Heart right ventricle (tissue), 16 donors: ENCODE measurements at regions of chr6 and their contacts with region 1.

Region 1: GRCh38 chr6:36985808-36986703 is at the start of gene MTCH1:
- DNase-seq: peak; percentile 91 to 92
- ATAC-seq: peak; percentile 93 to 97 (median 96)
- H3K4me3 ChIP-seq: peak within 1 kb of the TSS; percentile 84 to 100 (median 99)
- H3K27ac ChIP-seq: peak within 1 kb of the TSS; percentile 95 to 100 (median 98)
- H3K4me1 ChIP-seq: peaks cover 16 to 50% (median 45%) of the 10 kb centered on the region in 9 donors
- H3K27me3 ChIP-seq: no peaks in the 10 kb centered on the region
- CTCF ChIP-seq: no peak
- total RNA-seq, gene MTCH1: 127 to 296 (median 156) TPM

Region 2: GRCh38 chr6:36546920-36547645 is 439.0 kb before region 1 on chr6 and contains the start of gene STK38:
- intact Hi-C with region 1: loop called in 1 of 10 experiments (anchors 10 kb)
- DNase-seq: peak; percentile 93 to 96
- ATAC-seq: peak; percentile 95 to 99 (median 96)
- H3K4me3 ChIP-seq: peak within 1 kb of the TSS; percentile 77 to 98 (median 93)
- H3K27ac ChIP-seq: peak within 1 kb of the TSS; percentile 89 to 100 (median 98)
- H3K4me1 ChIP-seq: peaks cover 5 to 52% (median 39%) of the 10 kb centered on the region in 9 donors
- H3K27me3 ChIP-seq: no peaks in the 10 kb centered on the region
- CTCF ChIP-seq: peak in 4 of 9 donors; percentile 8 to 33 (median 29)
- total RNA-seq, gene STK38: 13.2 to 23.8 (median 21.5) TPM

Region 3: GRCh38 chr6:36765594-36766398 is 220.3 kb before region 1 on chr6:
- intact Hi-C with region 1: loop called in 1 of 10 experiments (anchors 10 kb)
- DNase-seq: peak; percentile 80 to 83
- ATAC-seq: peak; percentile 53 to 86 (median 80)
- H3K4me3 ChIP-seq: no peak overlapping the region
- H3K27ac ChIP-seq: no peak overlapping the region
- H3K4me1 ChIP-seq: peaks cover 12 to 45% (median 39%) of the 10 kb centered on the region in 9 donors
- H3K27me3 ChIP-seq: no peaks in the 10 kb centered on the region
- CTCF ChIP-seq: peak; percentile 67 to 96 (median 92)

Region 4: GRCh38 chr6:36885461-36886401 is 100.3 kb before region 1 on chr6 and contains the start of gene C6orf89:
- intact Hi-C with region 1: loop called in 5 of 10 experiments (anchors 1 to 10 kb)
- DNase-seq: peak; percentile 96 to 98
- ATAC-seq: peak; percentile 99 to 100 (median 100)
- H3K4me3 ChIP-seq: peak within 1 kb of the TSS; percentile 18 to 95 (median 74)
- H3K27ac ChIP-seq: peak within 1 kb of the TSS; percentile 76 to 95 (median 92)
- H3K4me1 ChIP-seq: peaks cover 8 to 46% (median 30%) of the 10 kb centered on the region in 9 donors
- H3K27me3 ChIP-seq: no peaks in the 10 kb centered on the region
- CTCF ChIP-seq: peak; percentile 78 to 96 (median 85)
- total RNA-seq, gene C6orf89: 64.6 to 104 (median 74.7) TPM

Region 5: DNA sequence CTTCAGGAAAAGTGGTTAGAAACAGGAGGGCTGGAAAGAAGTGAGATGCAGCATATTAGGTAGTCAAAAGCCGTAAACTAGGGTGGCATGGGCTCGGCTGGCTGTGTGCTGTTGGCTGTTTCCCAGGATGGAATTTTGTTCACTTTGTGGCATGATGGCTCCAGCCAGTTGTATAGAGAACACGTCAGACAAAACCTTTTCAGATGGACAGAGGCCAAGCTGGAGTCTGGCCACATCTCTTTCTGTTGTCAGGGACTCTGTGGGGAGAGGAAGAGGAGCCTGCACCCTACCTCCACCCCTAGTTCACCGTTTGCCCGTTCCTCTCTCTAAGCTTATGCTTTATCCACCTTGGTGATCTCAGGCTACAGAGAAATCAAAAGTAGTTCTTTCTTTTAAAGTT is 78.3 kb before region 1 on chr6:
- intact Hi-C with region 1: loop called in 1 of 10 experiments (anchors 5 kb)
- DNase-seq: peak; percentile 56 to 72
- ATAC-seq: peak; percentile 57 to 95 (median 92)
- H3K4me3 ChIP-seq: no peak overlapping the region
- H3K27ac ChIP-seq: peak overlapping the region; percentile 41 to 77 (median 60)
- H3K4me1 ChIP-seq: peaks cover 8 to 64% (median 37%) of the 10 kb centered on the region in 9 donors
- H3K27me3 ChIP-seq: no peaks in the 10 kb centered on the region
- CTCF ChIP-seq: no peak

Region 6: DNA sequence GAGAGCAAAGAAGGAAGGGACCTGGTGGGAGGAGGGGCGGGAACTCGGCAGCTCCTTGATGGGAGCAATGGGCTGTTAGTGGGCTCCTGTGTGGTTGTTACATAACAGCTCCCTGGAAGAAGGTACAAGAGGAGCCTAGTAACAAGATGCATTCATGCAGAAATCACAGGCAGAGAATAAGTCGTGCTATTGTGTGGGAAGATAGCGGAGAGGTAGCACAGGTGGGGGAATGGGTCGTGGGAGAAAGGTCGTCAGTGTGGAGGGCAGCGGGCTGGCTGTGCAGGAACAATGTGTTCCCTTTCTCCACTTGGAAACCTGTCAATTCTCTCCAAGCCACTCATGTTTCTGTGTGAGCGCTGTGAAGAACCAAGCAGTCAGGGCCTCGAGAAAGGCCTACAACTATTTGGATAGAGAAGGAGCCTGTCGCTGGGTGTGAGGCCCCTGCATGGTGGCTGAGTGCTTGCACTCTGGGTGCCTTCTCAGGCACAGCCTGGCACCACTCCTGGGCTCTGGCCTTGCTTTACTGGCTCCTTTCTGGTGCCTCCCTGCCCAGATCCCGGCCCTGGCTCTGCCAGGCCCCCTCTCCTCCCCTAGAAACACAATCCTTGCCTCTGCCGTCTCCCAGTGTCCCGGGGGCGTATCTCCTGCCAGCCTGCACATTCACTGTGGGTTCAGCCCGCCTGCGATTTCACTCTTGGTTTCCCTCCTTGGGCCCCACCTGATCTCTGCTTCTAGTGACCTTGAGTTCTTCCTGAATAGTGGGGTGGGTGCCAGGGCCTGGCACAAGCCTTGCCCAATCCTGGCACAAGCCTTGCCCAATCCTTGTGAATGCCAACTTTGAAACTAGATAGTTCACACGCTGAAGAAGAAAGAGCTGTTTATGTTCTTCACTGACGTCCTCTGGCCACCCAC is 12.0 kb after region 1 on chr6:
- intact Hi-C with region 1: loop called in 1 of 10 experiments (anchors 1 kb)
- DNase-seq: peak; percentile 45 to 56
- ATAC-seq: peak in 7 of 8 donors; percentile 61 to 87 (median 79)
- H3K4me3 ChIP-seq: no peak overlapping the region
- H3K27ac ChIP-seq: peak overlapping the region; percentile 76 to 94 (median 91)
- H3K4me1 ChIP-seq: peaks cover 0 to 21% (median 6%) of the 10 kb centered on the region in 9 donors
- H3K27me3 ChIP-seq: no peaks in the 10 kb centered on the region
- CTCF ChIP-seq: no peak

Region 7: DNA sequence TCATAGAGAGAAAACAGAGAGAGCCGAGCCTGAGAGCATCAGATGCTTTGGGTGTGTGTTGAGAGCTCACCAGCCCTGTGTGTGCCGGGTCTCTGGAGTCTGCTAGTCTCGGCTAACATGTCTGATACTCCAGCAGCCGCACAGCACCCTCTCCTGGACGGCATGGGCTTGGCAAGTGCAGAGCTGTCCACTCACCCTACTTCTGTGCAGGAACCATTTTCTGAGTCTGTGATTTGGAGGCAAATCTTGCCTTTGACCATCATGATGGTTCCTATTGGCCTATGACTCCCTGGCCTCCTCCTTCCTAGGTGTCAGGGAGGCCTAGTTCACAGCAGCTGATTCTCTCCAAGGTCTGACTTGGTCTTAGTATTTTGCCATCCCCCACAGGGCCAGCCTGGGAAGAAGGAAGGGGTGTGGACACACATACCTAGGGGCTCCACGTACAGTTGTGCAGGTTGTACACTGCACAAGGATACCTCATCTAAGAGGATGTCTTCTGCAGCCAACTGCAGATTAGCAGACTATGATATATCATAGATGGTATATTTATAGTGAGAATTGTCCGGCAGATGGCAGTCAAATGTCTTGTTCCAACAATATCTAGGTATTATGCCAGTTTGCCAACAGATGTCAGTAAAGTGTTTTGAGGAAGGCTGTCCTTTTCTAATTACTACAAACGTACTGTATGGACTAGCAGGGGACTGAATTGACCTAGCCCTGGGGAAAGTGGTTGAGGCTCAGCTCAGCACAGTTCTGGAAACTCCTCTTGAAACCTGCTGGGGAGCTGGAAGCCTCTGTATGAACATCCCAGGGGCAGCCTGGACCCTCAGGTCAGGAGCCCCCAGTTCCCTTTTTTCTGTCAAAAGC is 32.4 kb after region 1 on chr6:
- intact Hi-C with region 1: loop called in 1 of 10 experiments (anchors 5 kb)
- DNase-seq: peak; percentile 89 to 90
- ATAC-seq: peak; percentile 92 to 98 (median 96)
- H3K4me3 ChIP-seq: no peak overlapping the region
- H3K27ac ChIP-seq: peak overlapping the region in 7 of 10 donors; percentile 10 to 47 (median 38)
- H3K4me1 ChIP-seq: peaks cover 2 to 23% (median 8%) of the 10 kb centered on the region in 9 donors
- H3K27me3 ChIP-seq: no peaks in the 10 kb centered on the region
- CTCF ChIP-seq: peak; percentile 63 to 85 (median 83)

Region 8: GRCh38 chr6:37125783-37126492 is 139.9 kb after region 1 on chr6:
- intact Hi-C with region 1: no loop called
- DNase-seq: no peak
- ATAC-seq: no peak
- H3K4me3 ChIP-seq: no peak overlapping the region
- H3K27ac ChIP-seq: peak overlapping the region in 1 of 10 donors; percentile 31
- H3K4me1 ChIP-seq: peaks cover 0 to 43% (median 13%) of the 10 kb centered on the region in 9 donors
- H3K27me3 ChIP-seq: no peaks in the 10 kb centered on the region
- CTCF ChIP-seq: no peak

Region 9: GRCh38 chr6:37257634-37258404 is 271.8 kb after region 1 on chr6 and contains the starts of genes TBC1D22B and TMEM217:
- intact Hi-C with region 1: no loop called
- DNase-seq: peak; percentile 94 to 96
- ATAC-seq: peak; percentile 100
- H3K4me3 ChIP-seq: peak within 1 kb of the TSS; percentile 70 to 98 (median 89)
- H3K27ac ChIP-seq: peak within 1 kb of the TSS; percentile 69 to 98 (median 92)
- H3K4me1 ChIP-seq: peaks cover 0 to 33% (median 24%) of the 10 kb centered on the region in 9 donors
- H3K27me3 ChIP-seq: no peaks in the 10 kb centered on the region
- CTCF ChIP-seq: no peak
- total RNA-seq, gene TBC1D22B: 5.4 to 8.1 (median 6.6) TPM
- total RNA-seq, gene TMEM217: 0.20 to 1.1 (median 0.41) TPM in 8 of 10 donors, not detected in the others